ENCODE measurements at regions of chr2 and their contacts with region 1.

Region 1: GRCh38 chr2:131413148-131413747 is 49.3 kb upstream of the RAB6D start:
- DNase-seq: no peak
- ATAC-seq: peak; percentile 57
- H3K4me3 Mint-ChIP-seq: no peak overlapping the region
- H3K27ac Mint-ChIP-seq: no peak overlapping the region
- H3K4me1 Mint-ChIP-seq: peaks cover 9% of the 10 kb centered on the region
- H3K27me3 Mint-ChIP-seq: peaks cover 55% of the 10 kb centered on the region

Region 2: DNA sequence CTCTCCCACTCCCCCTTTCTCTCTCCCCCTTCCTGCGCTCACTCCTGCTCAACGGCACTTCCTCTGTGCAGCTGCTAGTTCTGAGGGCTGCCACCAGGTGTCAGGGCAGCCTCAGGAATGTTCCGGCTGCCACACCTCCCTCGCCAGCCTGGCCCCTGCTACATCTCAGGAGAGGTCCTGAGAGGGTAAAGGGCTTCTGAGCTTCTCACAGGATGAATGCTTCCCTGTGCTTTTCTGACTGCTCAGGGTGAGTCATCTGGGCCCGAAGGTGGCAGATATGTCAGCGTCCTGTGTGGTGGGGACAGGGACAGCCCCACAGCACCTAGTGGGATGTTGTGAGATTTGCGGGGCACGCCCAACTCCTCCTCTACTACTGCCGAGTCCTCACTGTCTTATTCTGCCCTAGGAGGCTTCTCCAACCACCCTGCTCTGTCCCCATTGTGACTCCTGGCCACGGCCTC is 259.1 kb before region 1 on chr2:
- CTCF ChIA-PET with region 1: interaction called, 13 read pairs
- DNase-seq: peak; percentile 87
- ATAC-seq: peak; percentile 92
- H3K4me3 Mint-ChIP-seq: no peak overlapping the region
- H3K27ac Mint-ChIP-seq: peak overlapping the region; percentile 2
- H3K4me1 Mint-ChIP-seq: peaks cover 29% of the 10 kb centered on the region
- H3K27me3 Mint-ChIP-seq: no peaks in the 10 kb centered on the region

Region 3: GRCh38 chr2:131492418-131493198 is 79.4 kb after region 1 on chr2:
- CTCF ChIA-PET with region 1: interaction called, 12 read pairs
- DNase-seq: peak; percentile 97
- ATAC-seq: peak; percentile 82
- H3K4me3 Mint-ChIP-seq: peak overlapping the region; percentile 96
- H3K27ac Mint-ChIP-seq: peak overlapping the region; percentile 98
- H3K4me1 Mint-ChIP-seq: peaks cover 48% of the 10 kb centered on the region
- H3K27me3 Mint-ChIP-seq: no peaks in the 10 kb centered on the region

Region 4: GRCh38 chr2:131580187-131580586 is 166.9 kb after region 1 on chr2:
- CTCF ChIA-PET with region 1: no interaction called
- DNase-seq: no peak
- ATAC-seq: no peak
- H3K4me3 Mint-ChIP-seq: no peak overlapping the region
- H3K27ac Mint-ChIP-seq: no peak overlapping the region
- H3K4me1 Mint-ChIP-seq: no peaks in the 10 kb centered on the region
- H3K27me3 Mint-ChIP-seq: peaks cover 47% of the 10 kb centered on the region